CD4-positive, alpha-beta T cell (primary cell): ENCODE measurements at regions of chr19 and their contacts with region 1.

Region 1: GRCh38 chr19:48993175-48994034 is at the starts of genes GYS1 and RUVBL2:
- DNase-seq: peak; percentile 98 to 100 (median 99)
- ATAC-seq: peak; percentile 92
- H3K4me3 ChIP-seq: peak within 1 kb of the TSS; percentile 84
- H3K4me3 Mint-ChIP-seq: peak within 1 kb of the TSS; percentile 92
- H3K27ac ChIP-seq: peak within 1 kb of the TSS; percentile 82 to 83
- H3K27ac Mint-ChIP-seq: peak within 1 kb of the TSS; percentile 90
- H3K4me1 ChIP-seq: peaks cover 43% of the 10 kb centered on the region
- H3K4me1 Mint-ChIP-seq: peaks cover 46% of the 10 kb centered on the region
- H3K27me3 ChIP-seq: no peaks in the 10 kb centered on the region
- H3K27me3 Mint-ChIP-seq: no peaks in the 10 kb centered on the region
- CTCF ChIP-seq: peak; percentile 97
- total RNA-seq, gene GYS1: 13.2 to 14.1 TPM
- total RNA-seq, gene RUVBL2: 10.7 to 12.3 TPM

Region 2: DNA sequence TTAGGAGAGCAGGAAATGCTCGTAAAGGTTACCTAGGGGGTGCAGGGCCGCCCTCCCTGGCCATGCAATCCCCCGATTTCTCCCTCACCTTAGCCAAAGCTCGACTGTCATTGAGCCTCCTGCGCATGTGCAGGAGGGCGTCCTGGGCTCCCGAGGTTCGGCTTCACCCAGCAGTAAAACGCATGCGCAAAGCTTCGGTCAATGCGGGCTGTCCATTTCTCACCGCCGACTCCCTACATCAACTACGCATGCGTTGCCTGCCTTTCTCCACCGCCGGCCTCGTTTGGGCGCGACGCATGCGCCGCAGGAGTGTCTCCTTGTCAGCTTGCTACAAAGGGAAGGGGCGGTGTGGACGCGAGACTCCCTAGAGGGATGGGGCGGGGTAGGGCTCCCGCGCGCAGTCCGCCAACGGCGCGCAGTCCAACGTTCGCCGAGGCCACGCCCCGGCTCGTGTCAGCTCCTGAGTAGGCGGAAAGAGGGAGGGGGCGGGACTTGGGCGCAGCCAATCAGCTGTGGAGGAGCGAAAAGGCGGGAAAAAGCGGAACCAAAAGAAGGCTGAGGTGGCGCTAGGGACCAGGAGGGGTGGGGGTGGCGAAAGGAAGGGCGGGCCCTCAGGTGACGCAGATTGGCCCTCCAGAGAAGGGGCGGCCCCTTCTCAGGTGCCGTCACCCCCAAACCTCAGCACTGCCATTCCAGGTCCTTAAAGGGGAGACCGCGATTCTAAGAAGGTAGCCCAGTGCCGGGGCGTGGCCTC is 629.4 kb before region 1 on chr19 and contains the starts of genes SYNGR4 and TMEM143:
- CTCF ChIA-PET with region 1: no interaction called
- POLR2A ChIA-PET with region 1: interaction called, 3 read pairs
- intact Hi-C with region 1: loop called in 1 of 2 experiments (anchors 10 kb)
- DNase-seq: peak; percentile 96 to 100 (median 98)
- ATAC-seq: peak; percentile 86
- H3K4me3 ChIP-seq: peak within 1 kb of the TSS; percentile 94
- H3K4me3 Mint-ChIP-seq: peak within 1 kb of the TSS; percentile 90
- H3K27ac ChIP-seq: peak within 1 kb of the TSS; percentile 77 to 87
- H3K27ac Mint-ChIP-seq: peak within 1 kb of the TSS; percentile 90
- H3K4me1 ChIP-seq: peaks cover 22% of the 10 kb centered on the region
- H3K4me1 Mint-ChIP-seq: peaks cover 17% of the 10 kb centered on the region
- H3K27me3 ChIP-seq: no peaks in the 10 kb centered on the region
- H3K27me3 Mint-ChIP-seq: no peaks in the 10 kb centered on the region
- CTCF ChIP-seq: no peak
- total RNA-seq, gene SYNGR4: not detected
- total RNA-seq, gene TMEM143: 9.4 to 11.0 TPM

Region 3: GRCh38 chr19:48637170-48637947 is 356.0 kb before region 1 on chr19 and contains the start of gene DBP:
- CTCF ChIA-PET with region 1: no interaction called
- POLR2A ChIA-PET with region 1: interaction called, 12 read pairs
- intact Hi-C with region 1: no loop called
- DNase-seq: peak; percentile 99 to 100 (median 100)
- ATAC-seq: peak; percentile 69
- H3K4me3 ChIP-seq: peak within 1 kb of the TSS; percentile 71
- H3K4me3 Mint-ChIP-seq: peak within 1 kb of the TSS; percentile 94
- H3K27ac ChIP-seq: peak within 1 kb of the TSS; percentile 86 to 94
- H3K27ac Mint-ChIP-seq: peak within 1 kb of the TSS; percentile 97
- H3K4me1 ChIP-seq: peaks cover 59% of the 10 kb centered on the region
- H3K4me1 Mint-ChIP-seq: peaks cover 50% of the 10 kb centered on the region
- H3K27me3 ChIP-seq: no peaks in the 10 kb centered on the region
- H3K27me3 Mint-ChIP-seq: no peaks in the 10 kb centered on the region
- CTCF ChIP-seq: no peak
- total RNA-seq, gene DBP: 48.3 to 55.6 TPM

Region 4: GRCh38 chr19:48795055-48795684 is 198.2 kb before region 1 on chr19:
- CTCF ChIA-PET with region 1: interaction called, 7 read pairs
- POLR2A ChIA-PET with region 1: interaction called, 10 read pairs
- intact Hi-C with region 1: no loop called
- DNase-seq: peak; percentile 72 to 93 (median 76)
- ATAC-seq: peak; percentile 97
- H3K4me3 ChIP-seq: peak overlapping the region; percentile 59
- H3K4me3 Mint-ChIP-seq: peak overlapping the region; percentile 96
- H3K27ac ChIP-seq: peak overlapping the region in 1 of 2 donors; percentile 23
- H3K27ac Mint-ChIP-seq: peak overlapping the region; percentile 90
- H3K4me1 ChIP-seq: peaks cover 14% of the 10 kb centered on the region
- H3K4me1 Mint-ChIP-seq: peaks cover 10% of the 10 kb centered on the region
- H3K27me3 ChIP-seq: no peaks in the 10 kb centered on the region
- H3K27me3 Mint-ChIP-seq: no peaks in the 10 kb centered on the region
- CTCF ChIP-seq: peak; percentile 99

Region 5: GRCh38 chr19:48965040-48965805 is 28.2 kb before region 1 on chr19 and contains the start of gene FTL:
- CTCF ChIA-PET with region 1: interaction called, 15 read pairs
- POLR2A ChIA-PET with region 1: interaction called, 41 read pairs
- intact Hi-C with region 1: no loop called
- DNase-seq: peak; percentile 71 to 94 (median 88)
- ATAC-seq: peak; percentile 78
- H3K4me3 ChIP-seq: peak within 1 kb of the TSS; percentile 85
- H3K4me3 Mint-ChIP-seq: peak within 1 kb of the TSS; percentile 97
- H3K27ac ChIP-seq: peak within 1 kb of the TSS; percentile 67 to 71
- H3K27ac Mint-ChIP-seq: peak within 1 kb of the TSS; percentile 97
- H3K4me1 ChIP-seq: peaks cover 55% of the 10 kb centered on the region
- H3K4me1 Mint-ChIP-seq: peaks cover 47% of the 10 kb centered on the region
- H3K27me3 ChIP-seq: peaks cover 0 to 2% of the 10 kb centered on the region in 2 experiments
- H3K27me3 Mint-ChIP-seq: no peaks in the 10 kb centered on the region
- CTCF ChIP-seq: no peak
- total RNA-seq, gene FTL: 616 to 627 TPM

Region 6: GRCh38 chr19:49118565-49119410 is 125.4 kb after region 1 on chr19 and contains the start of gene C19orf73:
- CTCF ChIA-PET with region 1: interaction called, 5 read pairs
- POLR2A ChIA-PET with region 1: interaction called, 13 read pairs
- intact Hi-C with region 1: no loop called
- DNase-seq: peak; percentile 91 to 99 (median 95)
- ATAC-seq: peak; percentile 78
- H3K4me3 ChIP-seq: peak within 1 kb of the TSS; percentile 69
- H3K4me3 Mint-ChIP-seq: peak within 1 kb of the TSS; percentile 92
- H3K27ac ChIP-seq: peak within 1 kb of the TSS; percentile 89 to 92
- H3K27ac Mint-ChIP-seq: peak within 1 kb of the TSS; percentile 82
- H3K4me1 ChIP-seq: peaks cover 45% of the 10 kb centered on the region
- H3K4me1 Mint-ChIP-seq: peaks cover 41% of the 10 kb centered on the region
- H3K27me3 ChIP-seq: no peaks in the 10 kb centered on the region
- H3K27me3 Mint-ChIP-seq: no peaks in the 10 kb centered on the region
- CTCF ChIP-seq: peak; percentile 46
- total RNA-seq, gene C19orf73: 1.5 to 2.3 TPM

Region 7: DNA sequence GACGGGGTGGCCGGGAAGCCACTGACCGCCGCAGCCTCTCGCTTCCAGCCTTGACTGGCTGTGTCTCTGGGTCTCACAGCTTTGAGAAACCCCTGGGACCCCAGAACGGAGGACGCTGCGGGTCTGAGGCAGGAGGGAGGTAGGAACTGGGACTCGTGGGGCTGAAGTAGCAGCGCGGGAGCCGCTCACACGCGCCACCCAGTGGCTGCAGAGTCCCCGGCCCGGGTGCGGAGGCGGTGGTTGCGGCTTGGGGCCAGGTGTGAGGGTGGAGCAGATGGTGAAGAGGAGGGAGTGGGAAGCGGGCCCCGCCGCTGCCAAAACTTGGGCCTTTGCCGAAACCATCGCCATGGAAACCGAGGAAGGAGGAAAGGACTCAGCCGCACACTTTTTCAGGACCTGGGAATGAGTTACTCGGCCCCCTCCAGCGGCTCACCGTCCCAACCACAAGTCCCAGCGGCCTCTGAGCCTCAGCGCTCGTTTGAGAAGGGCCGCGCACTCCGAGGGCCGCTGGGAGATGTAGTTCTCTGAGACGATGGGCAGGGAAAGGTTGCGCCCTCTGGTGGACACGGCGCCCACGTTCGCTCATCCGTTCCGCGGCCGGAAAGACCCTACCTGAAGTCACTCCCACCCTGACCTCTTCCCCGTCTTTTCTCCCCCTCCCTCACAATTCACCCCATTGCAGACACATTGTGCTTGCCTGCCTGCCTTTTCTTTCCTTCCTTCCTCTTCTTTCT is 450.1 kb after region 1 on chr19:
- CTCF ChIA-PET with region 1: no interaction called
- POLR2A ChIA-PET with region 1: no interaction called
- intact Hi-C with region 1: loop called in 1 of 2 experiments (anchors 10 kb)
- DNase-seq: peak; percentile 89 to 96 (median 91)
- ATAC-seq: peak; percentile 89
- H3K4me3 ChIP-seq: peak overlapping the region; percentile 66
- H3K4me3 Mint-ChIP-seq: peak overlapping the region; percentile 85
- H3K27ac ChIP-seq: no peak overlapping the region
- H3K27ac Mint-ChIP-seq: peak overlapping the region; percentile 84
- H3K4me1 ChIP-seq: peaks cover 47% of the 10 kb centered on the region
- H3K4me1 Mint-ChIP-seq: peaks cover 41% of the 10 kb centered on the region
- H3K27me3 ChIP-seq: peaks cover 39% of the 10 kb centered on the region in 2 experiments
- H3K27me3 Mint-ChIP-seq: peaks cover 47% of the 10 kb centered on the region
- CTCF ChIP-seq: peak; percentile 95